T-cell (primary cell): ENCODE measurements at regions of chr15 and their contacts with region 1.

Region 1: DNA sequence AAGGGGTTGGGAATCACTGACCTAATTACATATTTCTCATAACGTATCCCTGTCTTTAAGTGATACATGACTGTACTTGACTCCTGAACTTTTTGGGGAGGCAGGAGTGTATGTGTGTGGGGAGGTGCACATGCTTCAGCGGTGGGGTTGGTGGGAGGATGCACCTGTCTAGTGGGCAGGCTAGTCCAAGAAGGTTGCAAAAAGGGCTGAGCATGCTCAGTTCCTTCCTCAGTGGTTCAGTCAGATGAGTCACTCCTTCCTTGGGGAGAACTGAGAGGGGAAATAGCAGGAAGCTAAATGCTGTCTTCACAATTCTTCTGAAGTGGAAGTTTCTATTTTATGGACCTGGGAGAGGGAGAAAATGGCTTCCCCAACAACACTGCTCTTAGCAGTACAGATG is 24.6 kb upstream of the AP4E1 start:
- DNase-seq: no peak
- ATAC-seq: no peak
- H3K4me3 ChIP-seq: no peak overlapping the region
- H3K4me3 Mint-ChIP-seq: no peak overlapping the region
- H3K27ac ChIP-seq: no peak overlapping the region
- H3K27ac Mint-ChIP-seq: no peak overlapping the region
- H3K4me1 ChIP-seq: peaks cover 0 to 9% of the 10 kb centered on the region in 2 experiments
- H3K4me1 Mint-ChIP-seq: peaks cover 32 to 39% (median 39%) of the 10 kb centered on the region in 3 donors
- H3K27me3 ChIP-seq: no peaks in the 10 kb centered on the region
- H3K27me3 Mint-ChIP-seq: no peaks in the 10 kb centered on the region

Region 2: GRCh38 chr15:49055630-49056029 is 1828.3 kb before region 1 on chr15:
- CTCF ChIA-PET with region 1: no interaction called
- POLR2A ChIA-PET with region 1: interaction called in 1 of 2 experiments, 17 read pairs
- DNase-seq: no peak
- ATAC-seq: no peak
- H3K4me3 ChIP-seq: no peak overlapping the region
- H3K4me3 Mint-ChIP-seq: no peak overlapping the region
- H3K27ac ChIP-seq: no peak overlapping the region
- H3K27ac Mint-ChIP-seq: no peak overlapping the region
- H3K4me1 ChIP-seq: peaks cover 4 to 7% of the 10 kb centered on the region in 2 experiments
- H3K4me1 Mint-ChIP-seq: peaks cover 1 to 12% (median 6%) of the 10 kb centered on the region in 3 donors
- H3K27me3 ChIP-seq: no peaks in the 10 kb centered on the region
- H3K27me3 Mint-ChIP-seq: peaks cover 0 to 3% of the 10 kb centered on the region in 2 donors

Region 3: GRCh38 chr15:52569257-52569611 is 1685.3 kb after region 1 on chr15:
- CTCF ChIA-PET with region 1: interaction called in 1 of 2 experiments, 10 read pairs
- POLR2A ChIA-PET with region 1: no interaction called
- DNase-seq: no peak
- ATAC-seq: peak in 1 of 4 experiments; percentile 34
- H3K4me3 ChIP-seq: peak overlapping the region; percentile 58 to 73
- H3K4me3 Mint-ChIP-seq: peak overlapping the region; percentile 91 to 95 (median 93)
- H3K27ac ChIP-seq: peak overlapping the region; percentile 91
- H3K27ac Mint-ChIP-seq: peak overlapping the region; percentile 98 to 99
- H3K4me1 ChIP-seq: peaks cover 14 to 33% of the 10 kb centered on the region in 2 experiments
- H3K4me1 Mint-ChIP-seq: peaks cover 35 to 38% (median 36%) of the 10 kb centered on the region in 3 donors
- H3K27me3 ChIP-seq: no peaks in the 10 kb centered on the region
- H3K27me3 Mint-ChIP-seq: no peaks in the 10 kb centered on the region